ENCODE measurements at regions of chr6 and their contacts with region 1.

Region 1: GRCh38 chr6:31541658-31542521 is at the start of gene DDX39B:
- DNase-seq: peak; percentile 94 to 96
- H3K4me3 ChIP-seq: peak within 1 kb of the TSS; percentile 67
- H3K4me3 Mint-ChIP-seq: peak within 1 kb of the TSS; percentile 73
- H3K27ac Mint-ChIP-seq: peak within 1 kb of the TSS; percentile 91
- H3K4me1 ChIP-seq: no peaks in the 10 kb centered on the region; the same call in 1 of the 2 replicates
- H3K4me1 Mint-ChIP-seq: peaks cover 23% of the 10 kb centered on the region
- H3K27me3 ChIP-seq: no peaks in the 10 kb centered on the region
- H3K27me3 Mint-ChIP-seq: no peaks in the 10 kb centered on the region
- CTCF ChIP-seq: no peak
- total RNA-seq, gene DDX39B: 416 and 423 TPM in 2 replicates

Region 2: GRCh38 chr6:31525932-31526591 is 15.8 kb before region 1 on chr6:
- CTCF ChIA-PET with region 1: no interaction called
- POLR2A ChIA-PET with region 1: interaction called, 13 read pairs
- intact Hi-C with region 1: no loop called
- DNase-seq: no peak
- H3K4me3 ChIP-seq: no peak overlapping the region
- H3K4me3 Mint-ChIP-seq: no peak overlapping the region
- H3K27ac Mint-ChIP-seq: no peak overlapping the region
- H3K4me1 ChIP-seq: no peaks in the 10 kb centered on the region
- H3K4me1 Mint-ChIP-seq: peaks cover 9% of the 10 kb centered on the region
- H3K27me3 ChIP-seq: no peaks in the 10 kb centered on the region
- H3K27me3 Mint-ChIP-seq: no peaks in the 10 kb centered on the region
- CTCF ChIP-seq: no peak

Measured in Caco-2 (cell line).